ENCODE measurements at regions of chr2 and their contacts with region 1.

Region 1: DNA sequence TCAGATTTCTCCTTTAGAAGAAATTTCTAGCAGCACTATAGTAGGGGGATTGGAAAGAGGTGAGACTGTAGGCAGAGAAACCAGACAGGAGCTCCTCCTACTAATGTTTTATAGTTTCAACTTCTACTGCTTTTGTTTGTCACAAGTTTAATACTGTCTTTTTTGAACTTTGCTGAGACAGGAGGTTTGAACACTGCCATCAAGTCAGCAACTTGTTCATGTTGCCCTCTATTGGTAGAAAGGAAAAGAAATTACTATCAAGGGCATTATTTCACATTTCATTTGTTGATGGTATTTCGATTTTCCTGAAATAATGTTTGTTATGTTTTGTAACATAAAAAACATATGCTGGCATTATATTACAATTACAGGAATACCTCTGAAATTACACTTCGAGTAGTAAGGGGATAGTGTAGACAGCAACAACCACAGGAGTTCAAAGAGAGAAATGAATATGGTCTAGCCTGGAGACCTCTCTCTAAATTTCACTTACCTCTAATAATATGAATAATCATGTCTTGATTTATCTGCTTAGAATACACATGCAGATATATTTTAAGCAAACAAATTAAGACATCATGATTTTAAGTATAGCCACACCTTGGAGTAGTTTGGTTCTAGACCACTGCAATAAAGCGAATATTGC is 12.4 kb upstream of the CCDC88A start:
- DNase-seq: no peak
- ATAC-seq: peak in 1 of 2 donors; percentile 39
- H3K4me3 ChIP-seq: no peak overlapping the region
- H3K27ac ChIP-seq: no peak overlapping the region
- H3K4me1 ChIP-seq: no peaks in the 10 kb centered on the region
- H3K27me3 ChIP-seq: no peaks in the 10 kb centered on the region
- CTCF ChIP-seq: peak in 4 of 5 experiments; percentile 22 to 54 (median 46)
- POLR2A ChIP-seq: no peak

Region 2: GRCh38 chr2:55223958-55224760 is 207.9 kb before region 1 on chr2:
- in situ Hi-C with region 1: loop called in 1 of 4 experiments (anchors 10 kb)
- intact Hi-C with region 1: no loop called
- DNase-seq: peak in 1 of 2 donors; percentile 28
- ATAC-seq: peak; percentile 13 to 25
- H3K4me3 ChIP-seq: peak overlapping the region; percentile 78 to 97 (median 88)
- H3K27ac ChIP-seq: peak overlapping the region; percentile 87 to 93 (median 92)
- H3K4me1 ChIP-seq: peaks cover 0 to 5% of the 10 kb centered on the region in 2 donors
- H3K27me3 ChIP-seq: no peaks in the 10 kb centered on the region
- CTCF ChIP-seq: no peak
- POLR2A ChIP-seq: no peak

Region 3: DNA sequence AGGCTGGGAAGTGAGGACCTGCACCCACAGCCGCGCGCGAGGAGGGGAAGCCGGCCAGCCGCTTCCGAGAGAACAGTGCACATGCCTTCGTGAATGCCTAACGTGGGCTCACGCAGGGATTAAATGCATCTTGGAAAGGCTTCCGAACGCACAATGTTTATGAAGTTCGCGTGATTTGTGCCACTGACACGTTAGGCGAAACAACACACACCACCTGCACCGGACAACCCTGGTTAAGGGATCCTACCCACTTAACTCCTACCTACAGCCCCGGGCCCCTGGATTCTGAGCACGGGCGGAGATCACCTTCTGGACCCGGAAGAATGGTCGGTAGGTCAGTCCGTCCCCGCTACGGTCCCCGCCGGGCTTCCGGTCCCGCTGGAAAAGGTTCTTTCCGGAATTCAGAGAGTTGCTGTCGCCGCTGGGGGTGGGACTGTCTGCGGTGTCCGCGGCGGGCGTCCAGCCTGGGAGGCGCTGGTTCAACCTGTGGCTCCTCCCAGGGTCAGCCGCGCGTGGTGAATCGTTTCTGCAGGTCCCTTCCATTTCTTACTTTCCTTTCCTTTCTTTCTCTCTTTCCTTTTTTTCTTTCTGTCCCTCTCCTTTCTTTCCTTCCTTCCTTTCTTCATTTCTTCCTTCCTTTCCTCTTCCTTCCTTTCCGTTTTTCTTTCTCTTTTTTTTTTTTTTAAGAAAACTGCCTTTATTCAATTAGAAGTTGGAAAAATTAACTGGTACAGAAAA is 163.0 kb before region 1 on chr2 and contains the start of gene MTIF2:
- in situ Hi-C with region 1: no loop called
- intact Hi-C with region 1: loop called (anchors 1 kb)
- DNase-seq: peak; percentile 94 to 96
- ATAC-seq: peak; percentile 98 to 99
- H3K4me3 ChIP-seq: peak within 1 kb of the TSS; percentile 75 to 83 (median 79)
- H3K27ac ChIP-seq: peak within 1 kb of the TSS; percentile 81 to 93 (median 88)
- H3K4me1 ChIP-seq: peaks cover 6 to 16% of the 10 kb centered on the region in 2 donors
- H3K27me3 ChIP-seq: no peaks in the 10 kb centered on the region
- CTCF ChIP-seq: peak in 2 of 5 experiments; percentile 29 to 30
- POLR2A ChIP-seq: peak in 1 of 2 donors; percentile 57
- total RNA-seq, gene MTIF2: 23.0 to 42.5 (median 34.7) TPM

Region 4: DNA sequence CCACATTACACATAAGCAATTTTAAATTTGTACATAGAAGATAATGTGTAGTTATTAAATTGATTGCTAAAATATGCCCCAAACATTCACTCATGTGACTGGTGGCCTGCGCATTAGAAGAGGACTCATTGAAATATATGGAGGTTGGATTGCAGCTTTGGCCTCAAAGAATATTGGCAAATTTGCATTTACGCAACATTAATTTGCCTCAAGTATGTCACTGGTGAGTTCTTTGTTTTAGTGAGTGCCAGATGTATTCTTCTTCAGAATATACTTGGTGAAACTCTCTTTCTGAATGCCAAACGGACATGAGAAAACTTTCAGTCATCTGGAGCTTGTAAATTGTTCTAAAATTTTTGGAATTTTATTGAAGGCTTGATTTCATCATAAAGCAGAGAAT is 497.4 kb after region 1 on chr2:
- in situ Hi-C with region 1: no loop called
- intact Hi-C with region 1: no loop called
- DNase-seq: no peak
- ATAC-seq: no peak
- H3K4me3 ChIP-seq: no peak overlapping the region
- H3K27ac ChIP-seq: no peak overlapping the region
- H3K4me1 ChIP-seq: no peaks in the 10 kb centered on the region
- H3K27me3 ChIP-seq: peaks cover 6 to 10% (median 7%) of the 10 kb centered on the region in 3 donors
- CTCF ChIP-seq: no peak
- POLR2A ChIP-seq: no peak

Measured in gastrocnemius medialis (tissue), 4 donors.